HepG2 (cell line): ENCODE measurements at regions of chr1 and their contacts with region 1.

Region 1: GRCh38 chr1:119347858-119348257 is 20.7 kb upstream of the HAO2 start:
- DNase-seq: no peak
- ATAC-seq: no peak
- H3K4me3 ChIP-seq: no peak overlapping the region
- H3K27ac ChIP-seq: no peak overlapping the region
- H3K4me1 ChIP-seq: peaks cover 70% of the 10 kb centered on the region
- H3K27me3 ChIP-seq: no peaks in the 10 kb centered on the region
- CTCF ChIP-seq: no peak
- EP300 ChIP-seq: no peak
- POLR2A ChIP-seq: no peak
- RAD21 ChIP-seq: no peak

Region 2: GRCh38 chr1:119327436-119328155 is 20.3 kb before region 1 on chr1:
- CTCF ChIA-PET with region 1: no interaction called
- POLR2A ChIA-PET with region 1: interaction called, 10 read pairs
- in situ Hi-C with region 1: no loop called
- intact Hi-C with region 1: no loop called
- DNase-seq: peak; percentile 50
- ATAC-seq: peak; percentile 89
- H3K4me3 ChIP-seq: peak overlapping the region; percentile 50 to 75 (median 70)
- H3K27ac ChIP-seq: peak overlapping the region; percentile 74
- H3K4me1 ChIP-seq: peaks cover 35% of the 10 kb centered on the region
- H3K27me3 ChIP-seq: no peaks in the 10 kb centered on the region
- CTCF ChIP-seq: peak; percentile 67
- EP300 ChIP-seq: no peak
- POLR2A ChIP-seq: peak in 1 of 2 experiments; percentile 35; a peak in 1 of 4 replicates
- RAD21 ChIP-seq: no peak

Region 3: GRCh38 chr1:119336848-119337247 is 11.0 kb before region 1 on chr1:
- CTCF ChIA-PET with region 1: no interaction called
- POLR2A ChIA-PET with region 1: interaction called, 3 read pairs
- in situ Hi-C with region 1: no loop called
- intact Hi-C with region 1: loop called (anchors 1 kb)
- DNase-seq: no peak
- ATAC-seq: no peak
- H3K4me3 ChIP-seq: no peak overlapping the region
- H3K27ac ChIP-seq: peak overlapping the region; percentile 90
- H3K4me1 ChIP-seq: peaks cover 64% of the 10 kb centered on the region
- H3K27me3 ChIP-seq: no peaks in the 10 kb centered on the region
- CTCF ChIP-seq: no peak
- EP300 ChIP-seq: no peak
- POLR2A ChIP-seq: no peak
- RAD21 ChIP-seq: no peak